Activated CD4-positive, alpha-beta memory T cell treated with anti-CD3 and anti-CD28 coated beads for 36 hours (primary cell): ENCODE measurements at regions of chr13 and their contacts with region 1.

Region 1: GRCh38 chr13:98476538-98476966 is 100.4 kb downstream of the STK24 start:
- DNase-seq: peak; percentile 96
- H3K4me3 Mint-ChIP-seq: peak overlapping the region; percentile 62
- H3K27ac Mint-ChIP-seq: peak overlapping the region; percentile 91
- H3K4me1 Mint-ChIP-seq: peaks cover 62% of the 10 kb centered on the region
- H3K27me3 Mint-ChIP-seq: no peaks in the 10 kb centered on the region

Region 2: DNA sequence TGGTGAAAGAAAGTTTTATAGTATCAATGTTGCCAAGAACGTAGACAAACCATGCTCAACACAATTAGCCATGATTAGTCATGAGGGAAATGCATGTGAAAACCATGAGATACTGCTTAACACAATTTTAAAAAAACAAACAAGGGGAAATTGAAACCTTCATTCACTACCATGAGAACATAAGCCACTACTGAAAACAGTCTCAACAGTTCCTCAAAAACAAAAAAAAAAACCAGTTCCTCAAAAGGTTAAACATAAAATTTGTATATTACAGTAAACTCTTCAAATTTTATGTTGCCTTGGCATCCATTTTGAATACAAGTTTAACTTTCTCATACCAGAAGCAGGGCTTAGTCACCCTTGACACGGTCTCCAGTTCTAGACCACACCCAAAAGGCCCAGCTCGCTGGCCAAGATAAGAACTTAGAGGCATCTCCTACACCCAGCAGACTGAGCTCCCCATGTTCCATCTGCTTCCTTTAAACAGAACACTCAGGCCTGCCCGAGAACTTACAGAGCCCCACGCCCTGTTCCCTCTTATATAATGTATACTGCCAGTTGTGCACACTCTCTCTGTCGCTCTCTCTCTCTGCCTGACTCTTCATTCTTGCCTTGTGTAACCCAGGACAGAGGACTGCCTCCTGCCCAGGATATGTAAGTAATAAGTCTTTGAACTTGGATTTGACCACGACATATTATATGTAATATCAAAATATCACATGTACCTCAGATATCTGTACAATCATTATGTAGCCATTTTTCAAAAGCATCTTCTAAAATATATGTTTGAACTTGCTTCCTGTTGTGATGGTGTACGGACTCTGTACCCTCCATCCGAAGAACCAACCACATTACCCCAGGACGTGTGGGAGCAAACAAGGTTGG is 33.0 kb after region 1 on chr13:
- CTCF ChIA-PET with region 1: interaction called, 7 read pairs
- POLR2A ChIA-PET with region 1: interaction called, 5 read pairs
- intact Hi-C with region 1: loop called (anchors 1 kb)
- DNase-seq: peak; percentile 78
- H3K4me3 Mint-ChIP-seq: peak overlapping the region; percentile 33
- H3K27ac Mint-ChIP-seq: peak overlapping the region; percentile 95
- H3K4me1 Mint-ChIP-seq: peaks cover 95% of the 10 kb centered on the region
- H3K27me3 Mint-ChIP-seq: no peaks in the 10 kb centered on the region

Region 3: GRCh38 chr13:98517576-98518310 is 41.2 kb after region 1 on chr13:
- CTCF ChIA-PET with region 1: interaction called, 7 read pairs
- POLR2A ChIA-PET with region 1: interaction called, 4 read pairs
- intact Hi-C with region 1: loop called (anchors 1 kb)
- DNase-seq: peak; percentile 75
- H3K4me3 Mint-ChIP-seq: peak overlapping the region; percentile 53
- H3K27ac Mint-ChIP-seq: peak overlapping the region; percentile 93
- H3K4me1 Mint-ChIP-seq: peaks cover 98% of the 10 kb centered on the region
- H3K27me3 Mint-ChIP-seq: no peaks in the 10 kb centered on the region

Region 4: GRCh38 chr13:98549006-98549727 is 72.6 kb after region 1 on chr13:
- CTCF ChIA-PET with region 1: no interaction called
- POLR2A ChIA-PET with region 1: no interaction called
- intact Hi-C with region 1: loop called (anchors 2 kb)
- DNase-seq: no peak
- H3K4me3 Mint-ChIP-seq: no peak overlapping the region
- H3K27ac Mint-ChIP-seq: peak overlapping the region; percentile 79
- H3K4me1 Mint-ChIP-seq: peaks cover 84% of the 10 kb centered on the region
- H3K27me3 Mint-ChIP-seq: no peaks in the 10 kb centered on the region

Region 5: GRCh38 chr13:99033814-99034213 is 557.3 kb after region 1 on chr13:
- CTCF ChIA-PET with region 1: no interaction called
- POLR2A ChIA-PET with region 1: no interaction called
- intact Hi-C with region 1: loop called (anchors 5 kb)
- DNase-seq: no peak
- H3K4me3 Mint-ChIP-seq: no peak overlapping the region
- H3K27ac Mint-ChIP-seq: no peak overlapping the region
- H3K4me1 Mint-ChIP-seq: peaks cover 57% of the 10 kb centered on the region
- H3K27me3 Mint-ChIP-seq: no peaks in the 10 kb centered on the region